KBM-7 (cell line): ENCODE measurements at regions of chr1 and their contacts with region 1.

Region 1: DNA sequence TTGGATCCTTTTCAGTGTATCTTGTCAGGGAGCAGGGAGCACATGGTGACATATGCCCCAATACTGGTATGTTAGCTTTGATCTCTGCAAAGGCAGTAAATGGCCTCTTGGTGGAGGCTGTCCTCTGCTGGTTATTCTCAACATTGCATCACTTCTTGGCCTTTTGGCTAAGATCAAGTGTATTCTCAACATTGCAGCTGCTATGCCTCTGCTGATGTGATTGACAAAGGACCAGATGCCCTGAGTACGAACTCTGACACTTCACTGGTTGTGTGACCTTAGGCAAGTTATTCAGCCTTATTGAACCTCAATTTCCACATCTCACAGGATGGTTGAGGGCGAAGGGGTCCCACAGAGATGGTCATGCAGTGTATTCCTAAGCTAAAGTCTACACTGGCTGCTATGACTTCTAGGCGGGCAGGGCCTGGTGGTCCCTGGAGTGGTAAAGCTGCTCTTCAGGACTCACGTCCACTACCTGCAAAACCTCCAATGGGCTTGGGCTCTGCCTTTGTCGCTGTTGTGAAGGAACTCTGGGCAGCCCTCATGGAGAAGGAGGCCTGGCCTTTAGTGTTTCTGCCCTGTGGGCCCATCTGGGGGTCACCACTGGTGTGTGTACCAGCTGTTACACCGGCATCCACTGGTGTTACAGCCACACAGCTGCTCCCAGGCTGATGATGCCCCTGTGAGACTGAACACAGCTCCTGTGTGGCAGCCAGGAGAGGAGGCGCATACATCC is 64.8 kb downstream of the DNTTIP2 start:
- DNase-seq: peak; percentile 81

Region 2: DNA sequence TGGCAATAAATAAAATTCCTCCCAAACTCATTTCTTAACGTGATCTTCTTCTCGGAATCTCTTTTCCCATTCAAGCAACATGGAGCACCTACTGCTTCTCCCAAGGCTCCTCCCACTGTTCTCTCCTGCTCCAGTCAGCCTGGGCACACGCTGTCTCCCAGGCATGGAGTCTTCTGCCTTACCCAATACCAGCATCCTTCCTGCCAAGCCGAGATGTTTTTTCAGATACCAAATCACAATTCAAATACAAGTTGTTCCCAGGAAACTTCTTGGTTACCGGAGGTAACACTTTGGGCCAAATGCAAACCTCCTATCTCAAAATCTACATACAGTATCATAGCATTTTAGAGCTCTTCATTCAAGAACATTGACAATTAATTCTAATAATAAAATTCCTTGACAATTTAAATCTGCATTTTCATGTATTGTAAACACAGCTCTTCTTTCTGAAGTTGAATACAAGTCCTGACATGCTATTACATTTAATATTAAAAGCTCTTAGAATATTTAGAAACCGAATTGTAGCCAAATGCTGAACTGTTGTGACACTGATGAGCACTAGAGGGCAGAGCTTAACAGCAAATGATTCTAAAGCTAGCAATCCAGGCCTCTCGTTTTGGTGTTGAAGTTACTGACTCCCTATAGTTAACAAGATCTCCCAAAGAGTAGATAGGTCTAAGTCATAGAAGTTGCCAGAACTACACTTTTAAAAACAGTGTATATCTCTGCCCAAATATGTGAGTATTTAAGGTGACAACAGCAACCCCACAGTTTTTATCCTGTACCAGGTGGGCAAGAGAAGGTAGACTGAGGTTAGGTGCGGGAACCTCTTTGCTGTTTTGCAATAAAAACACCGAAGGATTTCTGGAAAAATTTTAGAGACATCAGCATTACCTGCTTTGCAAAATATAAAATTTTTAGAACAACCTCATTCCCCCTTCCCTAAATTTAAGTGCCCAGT is 184.8 kb before region 1 on chr1:
- in situ Hi-C with region 1: loop called (anchors 25 kb)
- DNase-seq: peak; percentile 75

Region 3: GRCh38 chr1:93988634-93989350 is 174.6 kb after region 1 on chr1:
- in situ Hi-C with region 1: no loop called
- DNase-seq: no peak